Naive thymus-derived CD4-positive, alpha-beta T cell (primary cell): ENCODE measurements at regions of chr19 and their contacts with region 1.

Region 1: DNA sequence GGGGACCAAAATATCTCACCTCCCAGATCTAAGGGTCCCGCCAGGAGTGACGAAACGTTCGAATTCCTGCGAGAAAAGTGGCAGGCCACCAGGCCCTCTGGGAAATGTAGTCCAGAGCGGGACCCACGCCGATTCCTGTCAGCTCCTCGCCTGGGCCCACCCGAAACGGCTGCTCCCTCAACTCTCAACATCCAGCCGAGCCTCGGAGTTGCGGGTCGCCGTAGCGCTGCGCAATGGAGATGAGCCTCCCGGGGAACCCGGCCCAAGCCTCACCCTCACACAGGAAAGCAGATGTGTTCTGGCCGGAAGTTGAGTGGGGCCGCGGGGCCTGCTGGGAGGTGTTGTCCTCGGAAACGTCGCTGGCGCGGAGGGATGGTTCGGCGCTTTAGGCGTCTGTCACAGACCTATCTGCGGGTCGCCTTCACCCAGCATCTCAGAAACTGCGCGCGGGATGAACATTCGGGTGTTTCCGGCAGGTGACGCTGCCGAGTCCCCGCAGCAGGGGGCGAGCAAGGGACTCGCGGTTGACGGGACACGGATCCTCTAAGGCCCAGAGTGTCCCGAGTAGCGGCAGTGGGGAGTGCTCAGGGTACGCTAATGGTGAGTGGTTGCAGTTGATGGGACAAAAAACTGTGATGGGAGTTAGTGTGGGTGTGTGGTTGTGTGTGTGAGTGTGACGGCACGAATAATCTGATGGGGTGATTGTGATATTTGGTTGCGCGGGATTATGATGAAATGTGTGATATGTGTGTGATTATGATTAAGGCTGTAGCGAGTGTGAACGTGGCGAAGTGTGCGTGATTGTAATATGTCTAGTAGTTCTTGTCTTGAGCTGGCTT is at the starts of genes ZNF568 and ZNF829:
- DNase-seq: peak; percentile 78 to 96 (median 93)
- ATAC-seq: peak; percentile 97
- H3K4me3 ChIP-seq: peak within 1 kb of the TSS; percentile 95
- H3K4me3 Mint-ChIP-seq: peak within 1 kb of the TSS; percentile 87 to 99 (median 95)
- H3K27ac ChIP-seq: peak within 1 kb of the TSS; percentile 94
- H3K27ac Mint-ChIP-seq: peak within 1 kb of the TSS; percentile 90 to 97 (median 94)
- H3K4me1 ChIP-seq: peaks cover 8 to 13% of the 10 kb centered on the region in 2 donors
- H3K4me1 Mint-ChIP-seq: peaks cover 19 to 46% (median 29%) of the 10 kb centered on the region in 7 donors
- H3K27me3 ChIP-seq: no peaks in the 10 kb centered on the region
- H3K27me3 Mint-ChIP-seq: no peaks in the 10 kb centered on the region
- total RNA-seq, gene ZNF568: 8.2 to 18.0 (median 9.3) TPM
- total RNA-seq, gene ZNF829: 2.6 to 9.0 (median 6.3) TPM

Region 2: GRCh38 chr19:36378625-36379509 is 537.3 kb before region 1 on chr19 and contains the start of gene ZFP14:
- CTCF ChIA-PET with region 1: no interaction called
- POLR2A ChIA-PET with region 1: no interaction called
- intact Hi-C with region 1: loop called in 1 of 2 experiments (anchors 1 kb)
- DNase-seq: peak; percentile 86 to 95 (median 93)
- ATAC-seq: peak; percentile 99
- H3K4me3 ChIP-seq: peak within 1 kb of the TSS; percentile 86
- H3K4me3 Mint-ChIP-seq: peak within 1 kb of the TSS; percentile 82 to 98 (median 94)
- H3K27ac ChIP-seq: peak within 1 kb of the TSS; percentile 86
- H3K27ac Mint-ChIP-seq: peak within 1 kb of the TSS; percentile 55 to 98 (median 94)
- H3K4me1 ChIP-seq: peaks cover 0 to 10% of the 10 kb centered on the region in 2 donors
- H3K4me1 Mint-ChIP-seq: peaks cover 9 to 23% (median 21%) of the 10 kb centered on the region in 7 donors
- H3K27me3 ChIP-seq: no peaks in the 10 kb centered on the region
- H3K27me3 Mint-ChIP-seq: no peaks in the 10 kb centered on the region
- total RNA-seq, gene ZFP14: 5.3 to 24.0 (median 9.2) TPM

Region 3: GRCh38 chr19:36573020-36573885 is 343.0 kb before region 1 on chr19 and contains the start of gene ZNF529:
- CTCF ChIA-PET with region 1: no interaction called
- POLR2A ChIA-PET with region 1: no interaction called
- intact Hi-C with region 1: loop called in 1 of 2 experiments (anchors 10 kb)
- DNase-seq: peak; percentile 67 to 95 (median 85)
- ATAC-seq: peak; percentile 95
- H3K4me3 ChIP-seq: peak within 1 kb of the TSS; percentile 95
- H3K4me3 Mint-ChIP-seq: peak within 1 kb of the TSS; percentile 80 to 100 (median 93)
- H3K27ac ChIP-seq: peak within 1 kb of the TSS; percentile 98
- H3K27ac Mint-ChIP-seq: peak within 1 kb of the TSS; percentile 94 to 100 (median 98)
- H3K4me1 ChIP-seq: peaks cover 0 to 15% of the 10 kb centered on the region in 2 donors
- H3K4me1 Mint-ChIP-seq: peaks cover 23 to 46% (median 40%) of the 10 kb centered on the region in 7 donors
- H3K27me3 ChIP-seq: no peaks in the 10 kb centered on the region
- H3K27me3 Mint-ChIP-seq: no peaks in the 10 kb centered on the region
- total RNA-seq, gene ZNF529: 22.6 to 37.8 (median 33.8) TPM

Region 4: DNA sequence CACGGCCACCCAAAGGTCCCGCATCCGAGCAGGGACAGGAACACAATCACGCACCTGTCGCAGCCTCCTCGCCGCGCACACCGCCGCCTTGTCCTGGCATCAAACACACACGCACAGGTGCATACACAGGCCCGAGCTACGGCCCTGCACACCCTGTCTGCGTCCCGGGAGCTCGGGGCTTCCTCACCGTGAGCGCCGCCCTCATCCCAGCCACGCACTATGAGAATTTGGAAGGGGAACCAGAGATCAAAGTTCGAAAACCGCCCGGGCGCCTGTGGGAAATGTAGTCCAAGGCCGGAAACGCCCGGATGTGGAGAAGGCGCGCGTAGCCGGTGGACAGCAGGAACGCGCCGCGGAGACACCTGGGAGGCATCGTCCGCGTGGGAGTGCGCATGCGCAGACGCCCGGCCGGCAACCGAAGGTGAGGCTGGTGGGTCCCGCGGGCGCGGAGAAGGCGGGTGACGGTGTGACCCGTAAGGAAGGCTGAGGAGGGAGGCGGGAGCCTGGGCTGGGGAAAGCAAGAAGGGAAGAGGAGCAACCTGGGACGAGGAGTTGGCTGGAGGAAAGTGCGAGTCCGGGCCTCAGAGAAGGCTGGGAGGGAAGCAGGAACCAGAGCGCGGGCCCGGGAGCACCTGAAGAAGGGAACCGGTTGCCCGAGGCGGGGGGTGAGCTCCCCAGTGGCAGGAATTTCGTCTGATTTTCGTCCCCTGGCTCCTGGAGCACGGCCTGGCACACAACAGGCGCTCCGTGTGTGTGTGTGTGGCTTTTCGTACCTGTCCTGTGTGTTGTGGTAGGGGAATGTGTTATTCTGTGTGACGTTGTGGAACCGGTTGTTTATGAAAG is 228.8 kb before region 1 on chr19 and contains the start of gene ZNF567:
- CTCF ChIA-PET with region 1: no interaction called
- POLR2A ChIA-PET with region 1: no interaction called
- intact Hi-C with region 1: loop called (anchors 1 to 5 kb)
- DNase-seq: peak; percentile 90 to 99 (median 93)
- ATAC-seq: peak; percentile 97
- H3K4me3 ChIP-seq: peak within 1 kb of the TSS; percentile 85
- H3K4me3 Mint-ChIP-seq: peak within 1 kb of the TSS; percentile 94 to 100 (median 98)
- H3K27ac ChIP-seq: peak within 1 kb of the TSS; percentile 86
- H3K27ac Mint-ChIP-seq: peak within 1 kb of the TSS; percentile 92 to 97 (median 95)
- H3K4me1 ChIP-seq: peaks cover 13 to 22% of the 10 kb centered on the region in 2 donors
- H3K4me1 Mint-ChIP-seq: peaks cover 26 to 49% (median 40%) of the 10 kb centered on the region in 7 donors
- H3K27me3 ChIP-seq: no peaks in the 10 kb centered on the region
- H3K27me3 Mint-ChIP-seq: peaks cover 0 to 5% (median 0%) of the 10 kb centered on the region in 5 donors
- total RNA-seq, gene ZNF567: 7.0 to 18.3 (median 9.3) TPM

Region 5: GRCh38 chr19:36850559-36851442 is 65.4 kb before region 1 on chr19 and contains the start of gene ZNF345:
- CTCF ChIA-PET with region 1: no interaction called
- POLR2A ChIA-PET with region 1: interaction called, 5 read pairs
- intact Hi-C with region 1: loop called (anchors 1 kb)
- DNase-seq: peak; percentile 62 to 91 (median 88)
- ATAC-seq: peak; percentile 93
- H3K4me3 ChIP-seq: peak within 1 kb of the TSS; percentile 92
- H3K4me3 Mint-ChIP-seq: no peak within 1 kb of the TSS
- H3K27ac ChIP-seq: peak within 1 kb of the TSS; percentile 86
- H3K27ac Mint-ChIP-seq: no peak within 1 kb of the TSS
- H3K4me1 ChIP-seq: peaks cover 9 to 16% of the 10 kb centered on the region in 2 donors
- H3K4me1 Mint-ChIP-seq: peaks cover 0 to 22% (median 13%) of the 10 kb centered on the region in 7 donors
- H3K27me3 ChIP-seq: no peaks in the 10 kb centered on the region
- H3K27me3 Mint-ChIP-seq: no peaks in the 10 kb centered on the region
- total RNA-seq, gene ZNF345: 6.8 to 18.2 (median 7.8) TPM

Region 6: DNA sequence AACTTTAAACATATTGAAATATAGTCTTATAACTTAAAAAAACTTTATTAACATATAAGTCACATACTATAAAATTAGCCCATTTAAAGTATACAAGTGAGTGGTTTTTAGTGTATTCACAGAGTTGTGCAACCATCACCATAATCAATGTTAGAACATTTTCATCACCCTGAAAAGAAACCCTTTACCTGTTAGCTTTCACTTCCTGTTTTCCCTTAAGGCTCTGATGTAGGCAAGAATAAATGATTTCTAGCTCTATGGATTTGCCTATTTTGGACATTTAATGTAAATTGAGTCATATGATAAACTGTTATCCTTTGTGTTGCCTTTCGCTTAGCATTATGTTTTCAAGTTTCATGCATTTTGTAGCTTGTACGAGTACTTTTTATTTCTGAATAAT is 15.5 kb after region 1 on chr19:
- CTCF ChIA-PET with region 1: no interaction called
- POLR2A ChIA-PET with region 1: no interaction called
- intact Hi-C with region 1: no loop called
- DNase-seq: no peak
- ATAC-seq: no peak
- H3K4me3 ChIP-seq: no peak overlapping the region
- H3K4me3 Mint-ChIP-seq: no peak overlapping the region
- H3K27ac ChIP-seq: no peak overlapping the region
- H3K27ac Mint-ChIP-seq: no peak overlapping the region
- H3K4me1 ChIP-seq: no peaks in the 10 kb centered on the region
- H3K4me1 Mint-ChIP-seq: peaks cover 0 to 2% (median 0%) of the 10 kb centered on the region in 7 donors
- H3K27me3 ChIP-seq: no peaks in the 10 kb centered on the region
- H3K27me3 Mint-ChIP-seq: no peaks in the 10 kb centered on the region

Region 7: GRCh38 chr19:37114020-37114419 is 197.8 kb after region 1 on chr19:
- CTCF ChIA-PET with region 1: no interaction called
- POLR2A ChIA-PET with region 1: no interaction called
- intact Hi-C with region 1: no loop called
- DNase-seq: no peak
- ATAC-seq: no peak
- H3K4me3 ChIP-seq: peak overlapping the region; percentile 0
- H3K4me3 Mint-ChIP-seq: peak overlapping the region in 1 of 10 donors; percentile 21
- H3K27ac ChIP-seq: no peak overlapping the region
- H3K27ac Mint-ChIP-seq: no peak overlapping the region
- H3K4me1 ChIP-seq: no peaks in the 10 kb centered on the region
- H3K4me1 Mint-ChIP-seq: peaks cover 0 to 4% (median 0%) of the 10 kb centered on the region in 7 donors
- H3K27me3 ChIP-seq: no peaks in the 10 kb centered on the region
- H3K27me3 Mint-ChIP-seq: no peaks in the 10 kb centered on the region

Region 8: DNA sequence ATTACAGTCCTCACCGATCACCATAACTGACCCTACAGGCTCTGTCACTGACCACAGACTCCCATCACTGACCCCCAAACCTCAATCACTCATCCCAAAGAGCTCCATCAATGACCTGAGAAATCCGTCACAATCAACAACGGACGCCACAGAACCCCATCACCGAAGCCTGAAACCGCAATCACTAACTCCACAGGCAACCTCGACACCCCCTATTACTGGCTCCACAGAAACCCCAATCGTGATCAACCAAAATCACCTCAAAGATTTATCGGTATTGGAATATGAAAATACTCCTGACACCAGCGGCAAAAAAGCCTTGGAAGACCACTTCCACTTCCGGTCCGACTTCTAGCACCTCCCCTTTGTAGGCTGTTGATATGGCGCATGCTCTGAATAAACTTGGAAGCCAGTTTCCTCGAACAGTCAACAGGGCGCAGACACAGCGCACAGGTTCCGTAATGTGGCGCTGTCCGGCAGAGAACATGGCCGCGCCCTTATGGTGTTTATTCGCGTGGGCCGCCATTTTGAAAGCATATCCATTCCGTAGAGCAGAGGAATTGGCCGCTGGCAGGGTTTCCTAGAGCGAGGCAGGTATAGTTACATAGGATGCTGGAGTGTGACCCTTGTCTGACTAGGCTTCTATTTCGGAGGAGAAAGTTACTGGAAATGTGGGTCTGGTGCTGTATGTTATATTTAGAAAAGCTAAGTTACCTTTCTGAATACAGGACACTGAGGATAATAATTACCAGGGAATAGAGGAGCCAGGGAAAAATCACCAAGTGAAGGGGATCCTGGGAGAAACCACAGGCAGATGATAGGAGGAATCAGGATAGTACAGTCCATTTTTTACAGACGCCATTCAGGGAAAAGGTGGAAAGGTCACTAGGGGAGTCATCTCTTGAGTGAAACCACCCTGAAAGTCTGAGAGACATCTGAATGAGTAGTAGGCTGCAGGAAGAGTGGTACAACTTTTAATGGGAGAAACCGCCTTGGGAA is 256.5 kb after region 1 on chr19 and contains the start of gene ZNF585A:
- CTCF ChIA-PET with region 1: no interaction called
- POLR2A ChIA-PET with region 1: no interaction called
- intact Hi-C with region 1: loop called (anchors 1 kb)
- DNase-seq: peak; percentile 68 to 92 (median 88)
- ATAC-seq: peak; percentile 100
- H3K4me3 ChIP-seq: peak within 1 kb of the TSS; percentile 90
- H3K4me3 Mint-ChIP-seq: peak within 1 kb of the TSS in 3 of 10 donors; percentile 36 to 73 (median 39)
- H3K27ac ChIP-seq: peak within 1 kb of the TSS; percentile 84
- H3K27ac Mint-ChIP-seq: no peak within 1 kb of the TSS
- H3K4me1 ChIP-seq: no peaks in the 10 kb centered on the region
- H3K4me1 Mint-ChIP-seq: peaks cover 0 to 16% (median 4%) of the 10 kb centered on the region in 7 donors
- H3K27me3 ChIP-seq: no peaks in the 10 kb centered on the region
- H3K27me3 Mint-ChIP-seq: no peaks in the 10 kb centered on the region
- total RNA-seq, gene ZNF585A: 3.5 to 24.3 (median 7.2) TPM

Region 9: DNA sequence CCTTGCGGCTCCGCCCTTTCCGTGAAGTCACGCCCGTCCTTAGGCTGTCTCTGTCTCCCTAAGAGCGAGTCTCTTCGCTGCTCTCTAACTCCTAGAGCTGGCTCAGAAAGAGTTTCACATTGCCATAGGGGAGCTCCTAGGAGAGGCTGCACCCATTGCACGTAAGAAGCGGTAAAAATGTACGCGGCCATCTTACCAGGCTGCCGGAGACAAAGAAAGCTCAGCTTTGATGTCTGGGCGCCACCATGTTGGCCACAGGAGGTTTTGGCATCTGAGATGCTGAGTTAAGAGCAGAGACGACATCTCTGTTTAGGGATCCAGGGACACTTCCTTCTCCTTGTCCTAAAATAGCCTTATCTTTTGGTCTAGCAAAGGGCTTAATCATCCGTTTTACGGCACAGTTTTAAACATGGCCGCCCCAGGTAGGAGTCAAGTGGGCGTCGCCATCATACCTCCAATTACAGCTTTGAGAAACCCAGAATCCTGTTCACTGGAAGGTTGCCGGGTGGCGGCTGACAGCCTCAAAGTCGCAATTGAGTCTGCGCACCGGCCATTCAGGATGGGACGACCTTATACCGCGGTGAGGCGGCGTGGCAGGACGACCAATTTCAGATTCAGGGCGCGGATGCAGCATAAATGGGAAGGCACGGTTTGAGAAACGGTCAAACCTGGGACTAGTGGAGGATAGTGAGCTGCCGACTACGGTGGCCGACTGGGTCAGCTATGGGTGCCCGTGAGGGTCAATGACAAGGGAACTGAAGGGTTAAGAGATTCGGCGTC is 590.4 kb after region 1 on chr19 and contains the start of gene ZNF793:
- CTCF ChIA-PET with region 1: no interaction called
- POLR2A ChIA-PET with region 1: no interaction called
- intact Hi-C with region 1: loop called in 1 of 2 experiments (anchors 1 kb)
- DNase-seq: peak; percentile 33 to 88 (median 83)
- ATAC-seq: peak; percentile 90
- H3K4me3 ChIP-seq: peak within 1 kb of the TSS; percentile 83
- H3K4me3 Mint-ChIP-seq: no peak within 1 kb of the TSS
- H3K27ac ChIP-seq: peak within 1 kb of the TSS; percentile 90
- H3K27ac Mint-ChIP-seq: no peak within 1 kb of the TSS
- H3K4me1 ChIP-seq: peaks cover 0 to 14% of the 10 kb centered on the region in 2 donors
- H3K4me1 Mint-ChIP-seq: peaks cover 0 to 2% (median 0%) of the 10 kb centered on the region in 7 donors
- H3K27me3 ChIP-seq: no peaks in the 10 kb centered on the region
- H3K27me3 Mint-ChIP-seq: peaks cover 0 to 5% (median 0%) of the 10 kb centered on the region in 5 donors
- total RNA-seq, gene ZNF793: 1.1 to 11.7 (median 6.0) TPM